GM12878 (cell line): ENCODE measurements at regions of chr4 and their contacts with region 1.

Region 1: DNA sequence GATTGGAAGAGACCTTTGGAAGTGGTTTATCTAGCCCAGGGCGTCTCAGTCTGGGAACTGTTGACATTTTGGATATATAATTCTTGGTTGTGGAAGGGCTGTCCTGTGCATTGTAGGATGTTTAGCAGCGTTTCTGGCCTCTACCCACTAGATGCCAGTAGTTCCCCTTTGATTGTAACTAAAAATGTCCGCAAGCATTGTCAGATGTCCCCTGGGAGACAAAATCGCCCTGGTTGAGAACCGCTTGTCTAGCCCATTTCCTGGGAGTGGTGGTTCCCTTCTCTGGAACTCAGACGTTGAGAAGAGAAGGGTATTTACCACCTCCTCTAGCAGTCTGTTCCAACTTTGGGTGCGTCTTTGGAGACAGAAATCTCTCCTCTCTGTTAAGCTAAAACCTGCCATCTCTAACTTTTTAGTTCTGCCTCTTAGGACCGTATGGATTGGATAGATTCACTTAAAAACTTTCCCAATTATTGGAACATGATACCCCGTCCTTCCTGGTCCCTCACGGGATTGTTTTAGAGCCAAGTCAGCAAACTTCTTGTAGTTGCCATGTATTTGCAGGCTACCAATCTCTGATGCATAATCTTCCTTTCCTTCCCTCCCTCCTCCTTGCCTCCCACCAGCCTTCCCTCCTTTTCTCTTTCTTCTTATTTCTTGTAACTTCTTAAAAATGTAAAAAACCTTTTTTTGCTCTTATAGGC is 13.9 kb downstream of the TMEM165 start:
- DNase-seq: peak; percentile 39
- ATAC-seq: peak; percentile 93
- H3K4me3 ChIP-seq: no peak overlapping the region
- H3K27ac ChIP-seq: no peak overlapping the region
- H3K4me1 ChIP-seq: no peaks in the 10 kb centered on the region
- H3K27me3 ChIP-seq: no peaks in the 10 kb centered on the region
- CTCF ChIP-seq: peak; percentile 57 to 79 (median 72)
- EP300 ChIP-seq: no peak
- POLR2A ChIP-seq: no peak
- RAD21 ChIP-seq: peak; percentile 71

Region 2: DNA sequence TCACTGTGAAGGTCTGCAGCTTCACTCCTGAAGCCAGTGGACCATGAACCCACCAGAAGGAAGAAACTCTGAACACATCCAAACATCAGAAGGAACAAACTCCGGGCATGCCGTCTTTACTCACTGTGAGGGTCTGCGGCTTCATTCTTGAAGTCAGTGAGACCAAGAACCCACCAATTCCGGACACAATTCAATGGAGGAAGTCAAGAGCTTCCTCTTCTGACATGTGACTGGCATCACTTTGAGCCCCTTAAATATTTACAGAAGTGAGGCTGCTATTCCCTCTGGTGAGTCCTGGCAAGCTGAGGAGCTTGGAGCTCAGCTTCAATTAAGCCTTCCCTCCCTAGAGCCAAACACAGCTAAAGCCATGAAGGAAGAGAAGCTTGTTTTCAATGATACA is 167.1 kb before region 1 on chr4:
- CTCF ChIA-PET with region 1: no interaction called
- POLR2A ChIA-PET with region 1: no interaction called
- RAD21 ChIA-PET with region 1: no interaction called
- SMC1A ChIA-PET with region 1: no interaction called
- in situ Hi-C with region 1: no loop called
- intact Hi-C with region 1: no loop called
- DNase-seq: no peak
- ATAC-seq: no peak
- H3K4me3 ChIP-seq: no peak overlapping the region
- H3K27ac ChIP-seq: no peak overlapping the region
- H3K4me1 ChIP-seq: no peaks in the 10 kb centered on the region
- H3K27me3 ChIP-seq: no peaks in the 10 kb centered on the region
- CTCF ChIP-seq: no peak
- EP300 ChIP-seq: no peak
- POLR2A ChIP-seq: no peak
- RAD21 ChIP-seq: no peak

Region 3: GRCh38 chr4:55395529-55396307 is 13.9 kb before region 1 on chr4 and contains the start of gene TMEM165:
- CTCF ChIA-PET with region 1: interaction called, 75 read pairs
- POLR2A ChIA-PET with region 1: interaction called, 6 read pairs
- RAD21 ChIA-PET with region 1: interaction called, 41 read pairs
- SMC1A ChIA-PET with region 1: interaction called, 36 read pairs
- in situ Hi-C with region 1: no loop called
- intact Hi-C with region 1: no loop called
- DNase-seq: peak; percentile 41
- ATAC-seq: peak; percentile 94
- H3K4me3 ChIP-seq: peak within 1 kb of the TSS; percentile 88
- H3K27ac ChIP-seq: peak within 1 kb of the TSS; percentile 91
- H3K4me1 ChIP-seq: peaks cover 3% of the 10 kb centered on the region; the same call in 1 of the 2 replicates
- H3K27me3 ChIP-seq: no peaks in the 10 kb centered on the region
- CTCF ChIP-seq: no peak
- EP300 ChIP-seq: no peak
- POLR2A ChIP-seq: peak; percentile 99
- RAD21 ChIP-seq: no peak
- polyA plus RNA-seq, gene TMEM165: 18.3 to 32.5 TPM

Region 4: DNA sequence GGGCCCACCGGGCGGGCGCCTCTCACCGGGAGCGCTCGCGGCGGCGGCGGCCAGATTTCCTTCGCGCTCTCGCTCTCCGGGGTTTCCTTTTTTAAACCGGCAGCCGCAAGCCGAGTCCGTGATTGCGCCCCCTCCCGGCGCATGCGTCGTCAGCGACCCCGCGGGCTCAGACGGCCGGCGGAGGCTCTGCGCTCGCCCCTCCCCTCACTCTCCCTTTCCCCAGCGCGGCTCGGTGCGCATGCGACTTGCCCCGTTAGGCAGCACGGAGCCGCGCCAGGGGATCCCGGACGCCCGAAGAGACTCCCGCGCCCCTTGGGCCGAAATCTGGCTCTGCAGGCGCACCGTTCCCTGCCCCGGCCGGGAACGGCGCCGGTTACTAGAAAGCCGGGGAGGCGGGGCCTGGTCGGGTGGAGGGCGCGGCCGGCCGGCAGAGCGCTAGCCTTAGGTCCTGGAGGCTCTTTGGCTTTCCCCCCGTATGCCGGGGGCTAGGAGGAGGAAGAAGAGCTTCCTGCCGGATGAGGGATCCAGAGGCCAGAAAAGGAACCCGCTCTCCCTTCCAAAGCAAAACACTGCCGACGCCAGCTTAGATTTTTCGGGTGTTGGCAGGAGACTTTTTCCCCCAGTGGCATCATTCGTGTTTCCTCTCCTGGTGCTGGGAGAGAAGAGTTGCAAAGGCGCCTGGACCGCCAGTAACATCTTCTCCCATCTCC is 137.3 kb after region 1 on chr4 and contains the start of gene CLOCK:
- CTCF ChIA-PET with region 1: interaction called, 12 read pairs
- POLR2A ChIA-PET with region 1: interaction called, 10 read pairs
- RAD21 ChIA-PET with region 1: interaction called, 22 read pairs
- SMC1A ChIA-PET with region 1: interaction called, 17 read pairs
- in situ Hi-C with region 1: no loop called
- intact Hi-C with region 1: no loop called
- DNase-seq: no peak
- ATAC-seq: peak; percentile 84
- H3K4me3 ChIP-seq: peak within 1 kb of the TSS; percentile 80
- H3K27ac ChIP-seq: peak within 1 kb of the TSS; percentile 88
- H3K4me1 ChIP-seq: no peaks in the 10 kb centered on the region
- H3K27me3 ChIP-seq: no peaks in the 10 kb centered on the region
- CTCF ChIP-seq: peak; percentile 32 to 52 (median 33); a peak in 5 of 6 replicates
- EP300 ChIP-seq: no peak
- POLR2A ChIP-seq: peak; percentile 74
- RAD21 ChIP-seq: no peak
- polyA plus RNA-seq, gene CLOCK: 2.8 to 3.5 TPM

Region 5: GRCh38 chr4:55736605-55737183 is 327.1 kb after region 1 on chr4:
- CTCF ChIA-PET with region 1: interaction called, 9 read pairs
- POLR2A ChIA-PET with region 1: no interaction called
- RAD21 ChIA-PET with region 1: interaction called, 4 read pairs
- SMC1A ChIA-PET with region 1: interaction called, 7 read pairs
- in situ Hi-C with region 1: loop called (anchors 10 kb)
- intact Hi-C with region 1: loop called (anchors 2 kb)
- DNase-seq: no peak
- ATAC-seq: no peak
- H3K4me3 ChIP-seq: no peak overlapping the region
- H3K27ac ChIP-seq: no peak overlapping the region
- H3K4me1 ChIP-seq: no peaks in the 10 kb centered on the region
- H3K27me3 ChIP-seq: no peaks in the 10 kb centered on the region
- CTCF ChIP-seq: peak in 2 of 3 experiments; percentile 29 to 39; a peak in 2 of 6 replicates
- EP300 ChIP-seq: no peak
- POLR2A ChIP-seq: no peak
- RAD21 ChIP-seq: peak; percentile 51; the same call in 1 of the 2 replicates

Region 6: GRCh38 chr4:55866973-55867574 is 457.5 kb after region 1 on chr4:
- CTCF ChIA-PET with region 1: interaction called, 15 read pairs
- POLR2A ChIA-PET with region 1: interaction called, 3 read pairs
- RAD21 ChIA-PET with region 1: interaction called, 7 read pairs
- SMC1A ChIA-PET with region 1: interaction called, 26 read pairs
- in situ Hi-C with region 1: loop called (anchors 25 kb)
- intact Hi-C with region 1: loop called (anchors 2 kb)
- DNase-seq: peak; percentile 38
- ATAC-seq: peak; percentile 98
- H3K4me3 ChIP-seq: no peak overlapping the region
- H3K27ac ChIP-seq: peak overlapping the region; percentile 31; the same call in 1 of the 2 replicates
- H3K4me1 ChIP-seq: peaks cover 7% of the 10 kb centered on the region; the same call in 1 of the 2 replicates
- H3K27me3 ChIP-seq: no peaks in the 10 kb centered on the region
- CTCF ChIP-seq: peak; percentile 70 to 77 (median 77); a peak in 5 of 6 replicates
- EP300 ChIP-seq: no peak
- POLR2A ChIP-seq: no peak
- RAD21 ChIP-seq: peak; percentile 80

Region 7: DNA sequence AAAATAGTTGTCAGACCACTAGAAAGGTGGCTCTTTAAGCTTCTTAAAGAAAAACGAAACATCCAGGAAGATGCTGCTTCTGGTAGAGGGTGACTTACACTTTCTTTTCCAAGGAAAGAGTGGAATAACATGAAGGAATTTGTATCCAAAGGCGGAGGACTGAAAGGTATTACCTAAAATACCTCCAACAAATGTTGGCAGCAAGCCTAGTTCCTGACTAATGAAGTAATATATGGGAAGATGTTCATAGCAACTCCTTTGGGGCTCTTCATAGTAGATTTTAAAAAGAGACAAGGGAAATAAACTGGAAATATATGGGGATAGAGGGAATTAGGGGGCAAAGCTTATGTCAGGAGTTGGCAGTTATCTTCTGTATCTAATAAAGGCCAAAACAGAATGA is 861.5 kb after region 1 on chr4:
- CTCF ChIA-PET with region 1: no interaction called
- POLR2A ChIA-PET with region 1: no interaction called
- RAD21 ChIA-PET with region 1: no interaction called
- SMC1A ChIA-PET with region 1: no interaction called
- in situ Hi-C with region 1: no loop called
- intact Hi-C with region 1: no loop called
- DNase-seq: no peak
- ATAC-seq: no peak
- H3K4me3 ChIP-seq: no peak overlapping the region
- H3K27ac ChIP-seq: no peak overlapping the region
- H3K4me1 ChIP-seq: no peaks in the 10 kb centered on the region
- H3K27me3 ChIP-seq: no peaks in the 10 kb centered on the region
- CTCF ChIP-seq: no peak
- EP300 ChIP-seq: no peak
- POLR2A ChIP-seq: no peak
- RAD21 ChIP-seq: no peak